AG04450 (cell line): ENCODE measurements at regions of chr7 and their contacts with region 1.

Region 1: GRCh38 chr7:38398725-38399321 is 125.4 kb upstream of the TARP start:
- DNase-seq: peak; percentile 15
- H3K4me3 ChIP-seq: no peak overlapping the region
- H3K27ac ChIP-seq: no peak overlapping the region
- H3K27me3 ChIP-seq: no peaks in the 10 kb centered on the region
- CTCF ChIP-seq: peak; percentile 96

Region 2: DNA sequence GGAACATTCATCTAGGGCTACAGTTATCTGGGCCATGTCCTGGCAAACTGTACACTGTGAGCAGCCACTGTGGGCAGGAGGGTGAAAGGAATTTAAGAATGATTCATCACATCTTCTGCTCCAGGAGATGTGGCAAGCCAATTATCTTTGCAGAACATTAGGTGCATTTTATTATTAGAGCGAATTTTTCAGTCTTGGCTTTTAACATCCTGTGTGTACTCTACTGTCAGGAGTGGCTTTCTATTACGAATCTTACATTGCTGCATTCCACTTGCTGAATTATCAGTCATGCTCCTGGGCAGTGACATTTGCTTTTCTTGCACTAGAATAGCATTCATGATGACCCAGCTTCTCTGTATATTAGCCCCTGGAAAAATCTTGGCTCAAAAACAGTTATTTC is 16.1 kb before region 1 on chr7:
- CTCF ChIA-PET with region 1: interaction called, 12 read pairs
- POLR2A ChIA-PET with region 1: no interaction called
- DNase-seq: no peak
- H3K4me3 ChIP-seq: no peak overlapping the region
- H3K27ac ChIP-seq: no peak overlapping the region
- H3K27me3 ChIP-seq: no peaks in the 10 kb centered on the region
- CTCF ChIP-seq: no peak

Region 3: DNA sequence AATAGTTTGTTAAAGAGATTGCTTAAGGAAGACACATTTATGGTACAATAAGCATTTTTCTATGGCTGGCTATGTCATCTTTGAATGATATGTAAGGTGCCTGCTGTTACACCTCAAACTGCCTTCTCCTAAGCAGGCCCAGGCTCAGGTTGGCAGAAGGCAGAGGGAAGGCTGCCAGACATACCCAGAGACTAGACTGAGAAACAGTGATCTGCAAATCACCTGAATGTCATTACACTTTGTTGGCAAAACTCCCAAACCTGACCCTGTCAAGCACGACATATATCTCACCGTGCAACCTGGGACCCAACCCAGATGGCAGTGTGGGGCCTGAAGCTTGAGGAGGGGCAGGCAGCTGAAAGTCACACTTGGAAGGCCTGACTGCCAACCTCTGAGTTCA is 11.2 kb after region 1 on chr7:
- CTCF ChIA-PET with region 1: interaction called, 13 read pairs
- POLR2A ChIA-PET with region 1: no interaction called
- DNase-seq: no peak
- H3K4me3 ChIP-seq: no peak overlapping the region
- H3K27ac ChIP-seq: no peak overlapping the region
- H3K27me3 ChIP-seq: no peaks in the 10 kb centered on the region
- CTCF ChIP-seq: no peak

Region 4: DNA sequence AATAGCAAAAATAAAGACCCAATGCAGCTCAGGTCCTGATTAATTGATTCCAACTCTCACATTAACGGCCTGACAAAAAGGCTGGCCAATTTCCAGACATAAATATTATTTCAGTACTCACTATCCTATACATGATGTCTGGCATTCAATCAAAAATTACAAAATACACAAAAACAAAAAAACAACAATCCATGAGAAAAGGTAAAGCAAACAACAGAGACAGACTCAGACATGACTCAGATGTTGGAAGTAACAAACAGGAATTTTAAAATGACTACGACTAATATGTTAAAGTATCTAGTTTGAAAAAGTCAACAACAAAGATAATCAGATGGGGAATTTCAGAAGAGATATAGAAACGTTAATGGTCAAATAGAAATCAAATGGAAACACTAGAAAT is 79.6 kb after region 1 on chr7:
- CTCF ChIA-PET with region 1: no interaction called
- POLR2A ChIA-PET with region 1: no interaction called
- DNase-seq: no peak
- H3K4me3 ChIP-seq: no peak overlapping the region
- H3K27ac ChIP-seq: no peak overlapping the region
- H3K27me3 ChIP-seq: no peaks in the 10 kb centered on the region
- CTCF ChIP-seq: no peak

Region 5: GRCh38 chr7:38660427-38661099 is 261.7 kb after region 1 on chr7:
- CTCF ChIA-PET with region 1: interaction called, 47 read pairs
- POLR2A ChIA-PET with region 1: no interaction called
- DNase-seq: no peak
- H3K4me3 ChIP-seq: no peak overlapping the region
- H3K27ac ChIP-seq: no peak overlapping the region
- H3K27me3 ChIP-seq: no peaks in the 10 kb centered on the region
- CTCF ChIP-seq: peak; percentile 88

Region 6: DNA sequence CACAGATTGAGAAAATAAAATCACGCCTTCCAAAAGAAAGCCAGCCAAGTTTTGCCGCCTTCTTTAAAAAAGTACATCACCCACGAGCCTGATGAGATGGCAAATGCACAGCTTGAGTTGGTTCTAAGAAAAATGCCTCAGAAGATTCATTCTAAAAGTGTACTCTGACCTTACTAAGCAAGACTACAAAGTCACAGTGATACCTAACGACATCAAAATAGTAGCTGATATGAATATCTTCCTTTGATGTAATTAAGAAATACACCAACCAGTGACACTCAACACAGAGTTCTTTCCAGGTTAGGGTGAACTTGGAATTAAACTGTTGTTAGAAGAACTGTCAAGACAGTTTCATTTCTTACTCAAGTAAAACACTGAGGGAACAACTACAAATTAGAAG is 310.3 kb after region 1 on chr7:
- CTCF ChIA-PET with region 1: no interaction called
- POLR2A ChIA-PET with region 1: no interaction called
- DNase-seq: no peak
- H3K4me3 ChIP-seq: no peak overlapping the region
- H3K27ac ChIP-seq: no peak overlapping the region
- H3K27me3 ChIP-seq: no peaks in the 10 kb centered on the region
- CTCF ChIP-seq: no peak